ENCODE measurements at regions of chr17 and their contacts with region 1.

Region 1: GRCh38 chr17:75319904-75320691 is 30.9 kb upstream of the SLC25A19 start:
- DNase-seq: no peak
- H3K4me3 ChIP-seq: no peak overlapping the region
- H3K27ac ChIP-seq: no peak overlapping the region
- H3K4me1 ChIP-seq: peaks cover 0 to 5% of the 10 kb centered on the region in 2 donors
- H3K27me3 ChIP-seq: no peaks in the 10 kb centered on the region
- CTCF ChIP-seq: no peak
- POLR2A ChIP-seq: no peak

Region 2: GRCh38 chr17:74815550-74816370 is 504.3 kb before region 1 on chr17:
- intact Hi-C with region 1: no loop called
- DNase-seq: peak; percentile 57 to 58
- H3K4me3 ChIP-seq: no peak overlapping the region
- H3K27ac ChIP-seq: peak overlapping the region; percentile 87 to 92 (median 91)
- H3K4me1 ChIP-seq: peaks cover 60 to 79% of the 10 kb centered on the region in 2 donors
- H3K27me3 ChIP-seq: no peaks in the 10 kb centered on the region
- CTCF ChIP-seq: peak in 2 of 6 experiments; percentile 6 to 18
- POLR2A ChIP-seq: no peak

Region 3: GRCh38 chr17:75205037-75205792 is 114.9 kb before region 1 on chr17 and contains the start of gene NUP85:
- intact Hi-C with region 1: no loop called
- DNase-seq: peak; percentile 92 to 93
- H3K4me3 ChIP-seq: peak within 1 kb of the TSS; percentile 33 to 89 (median 74)
- H3K27ac ChIP-seq: peak within 1 kb of the TSS; percentile 90 to 94 (median 93)
- H3K4me1 ChIP-seq: peaks cover 0 to 15% of the 10 kb centered on the region in 2 donors
- H3K27me3 ChIP-seq: no peaks in the 10 kb centered on the region
- CTCF ChIP-seq: peak in 1 of 6 experiments; percentile 27
- POLR2A ChIP-seq: peak in 1 of 2 donors; percentile 67
- total RNA-seq, gene NUP85: 24.7 to 31.7 (median 27.1) TPM

Region 4: GRCh38 chr17:75393523-75394331 is 73.6 kb after region 1 on chr17:
- intact Hi-C with region 1: loop called (anchors 5 kb)
- DNase-seq: peak; percentile 99
- H3K4me3 ChIP-seq: peak overlapping the region; percentile 31 to 42 (median 39)
- H3K27ac ChIP-seq: peak overlapping the region; percentile 37 to 74 (median 60)
- H3K4me1 ChIP-seq: peaks cover 13 to 32% of the 10 kb centered on the region in 2 donors
- H3K27me3 ChIP-seq: no peaks in the 10 kb centered on the region
- CTCF ChIP-seq: peak in 2 of 6 experiments; percentile 37 to 42
- POLR2A ChIP-seq: peak in 1 of 2 donors; percentile 78

Region 5: DNA sequence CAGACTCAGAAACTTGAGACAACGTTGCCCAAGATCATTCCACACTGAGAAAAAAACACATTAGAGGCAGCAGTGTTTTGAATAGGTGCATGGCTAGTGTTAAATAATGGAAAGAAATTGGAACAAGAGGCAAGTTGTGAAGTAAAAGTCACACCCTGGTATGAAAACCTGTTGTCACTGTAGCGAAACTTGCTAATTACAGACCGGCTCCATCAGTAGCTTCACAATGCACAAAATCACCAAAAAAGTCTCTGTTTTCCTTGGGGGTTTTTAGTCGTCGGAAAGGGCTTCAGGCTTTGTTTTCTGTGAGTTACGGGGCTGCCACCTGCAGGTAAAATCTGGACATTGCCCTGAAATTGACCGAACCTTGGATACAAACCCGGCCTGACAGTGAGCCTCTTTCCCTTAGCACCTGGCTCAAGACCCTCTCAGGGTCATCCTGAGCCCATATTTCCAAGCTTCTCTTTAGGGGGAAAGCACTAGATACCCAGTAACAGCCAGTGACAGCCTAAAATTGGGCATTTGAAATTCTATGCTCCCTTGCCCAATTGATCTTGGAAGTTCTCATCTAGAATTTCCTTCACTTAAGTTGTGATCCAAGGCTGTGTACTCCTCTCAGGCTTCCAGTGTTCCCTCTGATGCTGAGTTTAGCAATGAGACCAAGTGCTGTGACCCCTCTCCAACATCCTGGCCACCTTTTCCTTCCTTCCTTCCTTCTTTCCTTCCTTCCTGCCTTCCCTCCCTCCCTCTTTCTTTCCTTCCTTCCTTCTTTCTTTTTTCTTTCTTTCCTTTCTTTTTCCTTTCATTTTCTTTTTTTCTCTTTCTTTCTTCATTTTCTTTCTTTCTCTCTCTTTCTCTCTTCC is 92.6 kb after region 1 on chr17:
- intact Hi-C with region 1: loop called (anchors 5 kb)
- DNase-seq: peak; percentile 70 to 71
- H3K4me3 ChIP-seq: no peak overlapping the region
- H3K27ac ChIP-seq: no peak overlapping the region
- H3K4me1 ChIP-seq: peaks cover 0 to 6% of the 10 kb centered on the region in 2 donors
- H3K27me3 ChIP-seq: no peaks in the 10 kb centered on the region
- CTCF ChIP-seq: peak; percentile 58 to 90 (median 78)
- POLR2A ChIP-seq: no peak

Region 6: DNA sequence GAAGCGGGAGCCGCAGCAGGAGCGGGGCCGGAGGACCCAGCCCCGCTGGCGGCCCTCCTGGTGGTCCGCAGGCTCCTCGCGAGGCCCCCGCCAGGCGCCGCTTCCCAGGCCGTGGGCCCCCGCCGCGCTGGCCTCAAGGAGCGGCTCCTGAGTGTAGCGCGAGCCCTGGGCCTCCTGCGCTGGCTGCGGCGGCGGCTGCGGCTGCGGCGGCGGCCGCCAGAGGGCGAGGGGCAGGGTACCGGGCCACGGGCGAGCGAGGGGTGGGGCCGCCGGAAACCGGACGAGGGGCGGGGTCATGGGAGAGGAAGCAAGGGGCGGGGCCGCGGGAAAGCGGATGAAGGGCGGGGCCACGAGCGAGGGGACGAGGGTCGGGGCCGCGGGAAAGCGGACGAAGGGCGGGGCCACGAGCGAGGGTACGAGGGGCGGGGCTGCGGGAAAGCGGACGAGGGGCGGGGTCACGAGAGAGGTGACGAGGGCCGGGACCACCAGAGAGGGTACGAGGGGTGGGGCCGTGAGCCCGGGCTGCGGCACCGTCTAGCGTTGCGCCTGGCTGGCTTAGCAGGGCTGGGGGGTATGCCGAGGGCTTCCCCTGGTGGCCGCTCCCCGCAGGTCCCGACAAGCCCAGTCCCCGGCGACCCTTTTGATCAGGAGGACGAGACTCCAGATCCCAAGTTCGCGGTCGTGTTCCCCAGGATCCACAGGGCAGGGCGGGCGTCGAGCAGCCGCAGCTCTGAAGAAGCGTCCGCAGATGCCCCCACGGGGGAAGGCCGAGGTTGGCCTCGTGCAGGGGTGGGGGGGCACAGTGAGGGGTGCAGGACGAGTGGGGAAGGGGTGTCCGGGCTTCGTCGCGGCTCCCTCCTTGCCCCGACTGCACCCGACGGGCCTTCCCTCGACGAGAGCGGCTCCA is 269.2 kb after region 1 on chr17:
- intact Hi-C with region 1: loop called (anchors 10 kb)
- DNase-seq: peak; percentile 95 to 96
- H3K4me3 ChIP-seq: peak overlapping the region; percentile 53 to 67 (median 58)
- H3K27ac ChIP-seq: peak overlapping the region; percentile 92 to 97 (median 97)
- H3K4me1 ChIP-seq: peaks cover 7 to 15% of the 10 kb centered on the region in 2 donors
- H3K27me3 ChIP-seq: no peaks in the 10 kb centered on the region
- CTCF ChIP-seq: peak; percentile 21 to 95 (median 67)
- POLR2A ChIP-seq: peak in 1 of 2 donors; percentile 88